Activated CD4-positive, alpha-beta T cell treated with anti-CD3 and anti-CD28 coated beads for 36 hours (primary cell): ENCODE measurements at regions of chr6 and their contacts with region 1.

Region 1: GRCh38 chr6:109187399-109188114 is 92.2 kb downstream of the CEP57L1 start:
- DNase-seq: peak; percentile 75
- ATAC-seq: peak; percentile 81
- H3K4me3 Mint-ChIP-seq: no peak overlapping the region
- H3K27ac Mint-ChIP-seq: no peak overlapping the region
- H3K4me1 Mint-ChIP-seq: peaks cover 3% of the 10 kb centered on the region
- H3K27me3 Mint-ChIP-seq: peaks cover 18% of the 10 kb centered on the region

Region 2: GRCh38 chr6:109165392-109165974 is 22.1 kb before region 1 on chr6:
- CTCF ChIA-PET with region 1: interaction called, 13 read pairs
- POLR2A ChIA-PET with region 1: no interaction called
- intact Hi-C with region 1: no loop called
- DNase-seq: no peak
- ATAC-seq: no peak
- H3K4me3 Mint-ChIP-seq: no peak overlapping the region
- H3K27ac Mint-ChIP-seq: no peak overlapping the region
- H3K4me1 Mint-ChIP-seq: no peaks in the 10 kb centered on the region
- H3K27me3 Mint-ChIP-seq: no peaks in the 10 kb centered on the region

Region 3: DNA sequence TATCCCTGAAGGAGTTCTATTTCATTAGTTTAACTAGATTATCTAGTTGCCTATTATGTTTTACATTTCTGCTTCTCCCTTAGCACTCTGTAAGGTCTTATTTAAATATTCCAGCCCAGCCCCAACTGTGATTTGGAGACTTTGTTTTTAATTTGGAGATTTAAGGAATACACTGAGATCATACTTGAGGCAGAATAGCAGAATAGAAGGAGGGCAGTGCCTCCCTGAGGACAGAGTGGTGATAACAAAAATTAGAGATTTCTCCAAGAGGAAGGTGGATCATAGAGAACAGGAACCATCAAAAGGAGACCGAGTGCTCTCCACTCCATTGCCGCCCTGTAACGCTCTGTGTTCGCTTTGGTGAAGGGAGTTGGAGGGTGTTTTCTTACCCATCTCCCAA is 209.5 kb after region 1 on chr6:
- CTCF ChIA-PET with region 1: interaction called, 6 read pairs
- POLR2A ChIA-PET with region 1: no interaction called
- intact Hi-C with region 1: loop called in 1 of 2 experiments (anchors 1 kb)
- DNase-seq: no peak
- ATAC-seq: no peak
- H3K4me3 Mint-ChIP-seq: no peak overlapping the region
- H3K27ac Mint-ChIP-seq: no peak overlapping the region
- H3K4me1 Mint-ChIP-seq: peaks cover 6% of the 10 kb centered on the region
- H3K27me3 Mint-ChIP-seq: no peaks in the 10 kb centered on the region

Region 4: GRCh38 chr6:109455502-109456282 is 268.1 kb after region 1 on chr6 and contains the start of gene MICAL1:
- CTCF ChIA-PET with region 1: interaction called, 10 read pairs
- POLR2A ChIA-PET with region 1: interaction called, 3 read pairs
- intact Hi-C with region 1: no loop called
- DNase-seq: peak; percentile 78
- ATAC-seq: peak; percentile 53
- H3K4me3 Mint-ChIP-seq: peak within 1 kb of the TSS; percentile 87
- H3K27ac Mint-ChIP-seq: peak within 1 kb of the TSS; percentile 92
- H3K4me1 Mint-ChIP-seq: peaks cover 58% of the 10 kb centered on the region
- H3K27me3 Mint-ChIP-seq: no peaks in the 10 kb centered on the region
- total RNA-seq, gene MICAL1: 25.1 to 26.3 TPM

Region 5: GRCh38 chr6:110053395-110054240 is 866.1 kb after region 1 on chr6:
- CTCF ChIA-PET with region 1: no interaction called
- POLR2A ChIA-PET with region 1: no interaction called
- intact Hi-C with region 1: loop called in 1 of 2 experiments (anchors 5 kb)
- DNase-seq: no peak
- ATAC-seq: peak; percentile 42
- H3K4me3 Mint-ChIP-seq: no peak overlapping the region
- H3K27ac Mint-ChIP-seq: no peak overlapping the region
- H3K4me1 Mint-ChIP-seq: no peaks in the 10 kb centered on the region
- H3K27me3 Mint-ChIP-seq: no peaks in the 10 kb centered on the region

Region 6: DNA sequence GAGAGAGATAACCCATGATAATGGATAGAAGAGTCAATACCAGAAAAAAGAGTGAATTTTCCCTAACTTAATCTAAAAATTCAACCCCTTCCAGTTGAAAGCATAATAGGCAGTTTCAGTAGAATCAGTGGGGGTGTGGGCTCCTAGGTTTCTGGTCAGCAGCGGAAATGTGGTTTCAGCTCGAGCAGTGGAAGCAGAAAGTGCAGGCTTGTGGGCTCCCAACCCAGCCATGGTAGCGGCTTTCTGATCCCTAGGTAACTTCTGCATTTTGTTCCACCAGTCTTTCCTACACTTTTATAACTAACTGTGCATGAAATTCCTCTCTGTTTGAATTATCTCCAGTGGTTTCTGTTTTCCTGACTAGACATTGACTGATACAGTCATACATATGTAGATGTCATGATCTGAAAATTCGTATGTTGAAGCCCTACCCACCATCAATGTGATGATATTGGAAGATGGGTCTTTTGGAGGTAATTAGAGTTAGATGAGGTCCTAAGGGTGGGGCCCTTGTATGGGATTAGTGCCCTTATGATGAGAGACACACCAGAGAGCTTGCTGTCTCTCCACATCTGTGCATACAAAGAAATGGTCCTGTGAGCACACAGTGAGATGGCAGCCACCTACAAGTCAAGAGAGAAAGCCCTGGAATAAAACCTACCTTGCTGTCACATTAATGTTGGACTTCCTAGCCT is 1234.3 kb after region 1 on chr6:
- CTCF ChIA-PET with region 1: no interaction called
- POLR2A ChIA-PET with region 1: no interaction called
- intact Hi-C with region 1: no loop called
- DNase-seq: no peak
- ATAC-seq: no peak
- H3K4me3 Mint-ChIP-seq: no peak overlapping the region
- H3K27ac Mint-ChIP-seq: no peak overlapping the region
- H3K4me1 Mint-ChIP-seq: no peaks in the 10 kb centered on the region
- H3K27me3 Mint-ChIP-seq: peaks cover 28% of the 10 kb centered on the region